ENCODE measurements at regions of chr7 and their contacts with region 1.

Region 1: DNA sequence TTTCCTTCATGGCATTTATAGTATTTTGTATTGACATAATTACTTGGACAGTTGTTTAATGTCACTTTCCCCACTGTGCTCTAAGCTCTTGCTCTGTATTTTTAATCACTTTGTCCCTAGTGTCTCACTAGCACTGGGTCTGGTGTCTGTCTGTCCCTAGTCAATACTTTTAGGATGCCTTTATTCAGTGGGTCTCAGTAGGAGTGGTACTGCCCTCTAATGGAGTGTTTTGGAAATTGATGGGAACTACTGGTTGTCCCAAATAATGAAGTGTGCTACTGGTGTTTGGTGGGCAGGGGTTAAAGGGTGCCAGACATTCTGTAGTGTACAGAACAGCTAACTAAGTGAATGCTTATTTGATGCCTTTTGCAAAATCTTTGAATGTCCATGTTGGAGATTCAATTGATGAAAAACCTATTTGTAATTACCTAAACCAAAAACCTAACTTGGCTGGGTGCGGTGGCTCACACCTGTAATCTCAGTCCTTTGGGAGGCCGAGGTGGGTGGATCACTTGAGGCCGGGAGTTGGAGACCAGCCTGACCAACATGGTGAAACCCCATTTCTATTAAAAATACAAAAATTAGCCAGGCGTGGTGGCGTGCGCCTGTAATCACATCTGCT is 33.3 kb downstream of the CDK14 start:
- DNase-seq: no peak
- H3K4me3 ChIP-seq: no peak overlapping the region
- CTCF ChIP-seq: peak; percentile 61

Region 2: DNA sequence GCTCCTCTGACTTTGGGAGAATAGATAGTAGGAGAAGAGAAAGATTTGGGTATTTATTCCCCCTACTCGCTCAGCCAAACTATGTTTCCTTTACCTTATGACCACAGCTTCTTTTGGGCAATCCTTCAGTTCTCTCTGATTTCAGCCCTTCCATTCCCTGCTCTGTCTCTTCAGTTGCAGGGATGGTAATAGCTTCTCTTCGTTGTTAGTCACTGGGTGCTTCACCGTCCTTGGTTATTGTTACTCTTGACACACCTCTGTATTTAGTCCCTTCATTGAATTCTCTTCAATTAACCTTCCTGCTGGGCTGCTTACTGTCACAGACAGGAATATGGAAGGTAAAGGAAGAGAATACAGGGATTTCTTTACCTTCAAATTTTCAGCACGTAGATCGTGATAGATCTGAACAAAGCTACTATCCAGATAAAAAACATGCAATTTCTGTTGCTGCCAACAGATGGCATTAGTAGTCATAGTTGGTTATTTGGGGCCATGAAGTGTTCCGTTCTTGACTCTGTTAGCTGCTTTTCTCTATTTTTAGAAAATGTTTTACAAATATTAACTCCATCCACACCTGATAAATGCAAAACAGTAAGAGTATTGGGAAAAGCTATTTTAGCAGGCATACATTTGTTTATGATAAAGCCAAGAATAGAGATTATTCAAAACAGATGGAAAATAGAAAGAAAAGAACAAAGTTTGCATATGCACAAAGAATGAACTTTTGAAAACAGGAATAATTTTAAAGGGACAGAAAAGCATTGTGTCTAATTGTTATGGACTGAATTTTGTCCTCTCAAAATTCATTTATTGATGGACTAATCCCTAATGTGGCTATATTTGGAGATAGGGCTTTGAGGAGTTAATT is 174.0 kb before region 1 on chr7:
- CTCF ChIA-PET with region 1: interaction called, 20 read pairs
- POLR2A ChIA-PET with region 1: no interaction called
- DNase-seq: no peak
- H3K4me3 ChIP-seq: no peak overlapping the region
- CTCF ChIP-seq: peak; percentile 31

Region 3: DNA sequence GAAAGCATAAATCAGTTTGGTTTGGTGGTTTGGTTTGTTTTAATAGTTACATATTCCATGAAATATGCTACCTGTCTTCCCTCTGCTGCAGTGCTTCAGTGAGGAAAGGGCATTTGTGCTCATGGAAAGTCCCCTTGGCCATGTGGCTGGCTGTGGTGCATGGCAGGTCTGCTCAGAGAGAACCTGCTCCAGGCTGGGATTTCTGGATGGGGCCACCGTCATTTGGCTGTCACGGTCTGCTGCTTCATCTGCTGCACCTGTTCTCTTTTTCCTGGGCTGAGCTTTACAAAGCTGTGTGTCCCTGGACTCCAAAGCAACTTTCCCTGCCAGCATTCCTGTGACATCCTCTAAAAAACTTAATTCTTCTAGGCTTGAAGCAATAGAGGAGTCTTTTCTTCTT is 24.4 kb before region 1 on chr7:
- CTCF ChIA-PET with region 1: interaction called, 21 read pairs
- POLR2A ChIA-PET with region 1: no interaction called
- DNase-seq: no peak
- H3K4me3 ChIP-seq: no peak overlapping the region
- CTCF ChIP-seq: no peak

Region 4: GRCh38 chr7:90618876-90619275 is 10.5 kb before region 1 on chr7:
- CTCF ChIA-PET with region 1: interaction called, 10 read pairs
- POLR2A ChIA-PET with region 1: no interaction called
- DNase-seq: no peak
- H3K4me3 ChIP-seq: no peak overlapping the region
- CTCF ChIP-seq: no peak

Region 5: GRCh38 chr7:90642962-90643361 is 13.6 kb after region 1 on chr7:
- CTCF ChIA-PET with region 1: interaction called, 15 read pairs
- POLR2A ChIA-PET with region 1: no interaction called
- DNase-seq: no peak
- H3K4me3 ChIP-seq: no peak overlapping the region
- CTCF ChIP-seq: no peak

Region 6: DNA sequence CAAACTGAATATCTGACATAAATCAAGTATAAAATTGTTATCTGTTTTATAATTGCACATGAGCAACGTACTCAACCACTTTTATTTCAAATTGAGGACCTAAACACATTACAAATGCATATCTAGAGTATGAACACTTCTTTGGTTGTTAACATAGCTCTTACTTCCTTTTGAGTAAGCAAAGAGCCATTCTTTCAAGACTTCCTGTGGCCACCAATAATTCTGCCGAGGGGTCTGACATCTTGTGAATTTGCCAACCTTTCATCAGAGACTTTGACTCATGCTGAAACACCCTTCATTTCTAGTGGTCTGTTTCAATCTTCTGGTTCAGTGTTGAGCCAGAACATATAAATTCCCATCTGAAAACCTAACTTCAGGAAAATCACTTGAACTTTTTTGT is 26.2 kb after region 1 on chr7:
- CTCF ChIA-PET with region 1: interaction called, 15 read pairs
- POLR2A ChIA-PET with region 1: no interaction called
- DNase-seq: peak; percentile 71
- H3K4me3 ChIP-seq: no peak overlapping the region
- CTCF ChIP-seq: no peak

Region 7: GRCh38 chr7:90766814-90767564 is 137.6 kb after region 1 on chr7:
- CTCF ChIA-PET with region 1: no interaction called
- POLR2A ChIA-PET with region 1: no interaction called
- DNase-seq: no peak
- H3K4me3 ChIP-seq: no peak overlapping the region
- CTCF ChIP-seq: no peak

Region 8: DNA sequence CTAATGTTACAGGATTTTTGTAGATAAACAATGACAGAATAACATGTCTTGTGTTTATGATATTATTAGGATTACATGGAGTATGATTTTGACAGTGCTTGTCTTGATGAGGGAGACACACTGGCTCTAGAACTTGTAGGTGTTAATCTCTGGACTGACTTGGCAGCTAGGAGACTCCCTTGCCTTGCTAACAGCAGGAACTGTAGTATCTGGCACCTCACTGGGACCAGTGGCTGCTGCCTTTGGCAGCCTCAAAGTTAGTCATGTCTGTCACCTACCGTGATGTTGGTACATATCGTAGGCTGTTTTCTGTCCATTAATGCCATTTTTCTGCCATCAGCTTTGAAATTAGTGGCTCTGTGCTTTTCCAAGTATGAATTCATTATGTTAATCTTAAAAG is 228.2 kb after region 1 on chr7:
- CTCF ChIA-PET with region 1: no interaction called
- POLR2A ChIA-PET with region 1: no interaction called
- DNase-seq: no peak
- H3K4me3 ChIP-seq: no peak overlapping the region
- CTCF ChIP-seq: no peak